Ovary (tissue), 10 donors: ENCODE measurements at regions of chr9 and their contacts with region 1.

Region 1: GRCh38 chr9:86079865-86080469 is 19.4 kb downstream of the GOLM1 start:
- DNase-seq: no peak
- H3K4me3 ChIP-seq: no peak overlapping the region
- H3K27ac ChIP-seq: no peak overlapping the region
- H3K4me1 ChIP-seq: no peaks in the 10 kb centered on the region
- H3K27me3 ChIP-seq: no peaks in the 10 kb centered on the region
- CTCF ChIP-seq: no peak
- EP300 ChIP-seq: no peak
- POLR2A ChIP-seq: no peak

Region 2: DNA sequence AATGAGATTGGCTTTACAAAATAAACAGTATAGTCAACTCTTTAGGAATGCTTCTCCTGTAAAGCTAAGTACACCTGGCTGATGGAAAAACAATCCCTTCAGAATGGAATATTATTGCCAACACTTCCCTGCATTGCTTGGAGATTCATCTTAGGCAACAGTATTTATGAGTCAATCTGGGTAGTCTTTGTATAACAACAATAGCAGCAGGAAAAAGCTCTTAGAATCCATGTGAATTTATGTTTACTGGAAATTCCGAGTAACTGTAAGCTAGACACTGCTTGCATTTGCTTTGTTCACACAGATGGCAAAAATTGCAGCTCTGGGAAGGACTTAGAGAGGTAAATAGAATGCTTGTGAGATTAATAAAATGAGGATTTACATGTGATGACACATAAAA is 1512.2 kb before region 1 on chr9:
- intact Hi-C with region 1: loop called in 1 of 4 experiments (anchors 10 kb)
- DNase-seq: no peak
- H3K4me3 ChIP-seq: no peak overlapping the region
- H3K27ac ChIP-seq: no peak overlapping the region
- H3K4me1 ChIP-seq: no peaks in the 10 kb centered on the region
- H3K27me3 ChIP-seq: no peaks in the 10 kb centered on the region
- CTCF ChIP-seq: no peak
- EP300 ChIP-seq: no peak
- POLR2A ChIP-seq: no peak

Region 3: DNA sequence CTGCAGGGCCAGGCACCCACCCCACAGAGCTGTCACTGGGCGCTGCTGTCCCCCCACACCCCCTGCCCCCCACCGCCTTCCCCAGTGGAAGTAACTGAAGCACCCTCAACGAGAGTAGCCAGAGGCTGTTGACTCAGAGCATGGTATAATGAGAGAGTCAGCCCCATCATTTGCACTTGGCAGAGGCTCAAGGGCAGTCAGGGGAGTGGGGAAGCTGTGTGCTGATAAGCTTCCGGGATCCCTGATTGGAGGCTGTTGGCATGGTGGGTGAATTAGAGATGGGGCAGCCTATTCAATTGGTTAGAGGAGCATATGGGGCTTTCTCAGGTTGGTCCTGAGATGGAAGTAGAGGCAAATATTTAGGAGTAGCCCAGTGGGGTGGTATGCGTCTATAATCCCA is 96.5 kb after region 1 on chr9:
- intact Hi-C with region 1: no loop called
- DNase-seq: no peak
- H3K4me3 ChIP-seq: no peak overlapping the region
- H3K27ac ChIP-seq: no peak overlapping the region
- H3K4me1 ChIP-seq: no peaks in the 10 kb centered on the region
- H3K27me3 ChIP-seq: no peaks in the 10 kb centered on the region
- CTCF ChIP-seq: no peak
- EP300 ChIP-seq: no peak
- POLR2A ChIP-seq: no peak